Psoas muscle (tissue), 8 donors: ENCODE measurements at regions of chr3 and their contacts with region 1.

Region 1: GRCh38 chr3:8727605-8728512 is 5.7 kb upstream of the CAV3 start:
- DNase-seq: no peak
- ATAC-seq: no peak
- H3K4me3 ChIP-seq: no peak overlapping the region
- H3K27ac ChIP-seq: no peak overlapping the region
- H3K4me1 ChIP-seq: peaks cover 3% of the 10 kb centered on the region
- H3K27me3 ChIP-seq: no peaks in the 10 kb centered on the region
- CTCF ChIP-seq: no peak

Region 2: DNA sequence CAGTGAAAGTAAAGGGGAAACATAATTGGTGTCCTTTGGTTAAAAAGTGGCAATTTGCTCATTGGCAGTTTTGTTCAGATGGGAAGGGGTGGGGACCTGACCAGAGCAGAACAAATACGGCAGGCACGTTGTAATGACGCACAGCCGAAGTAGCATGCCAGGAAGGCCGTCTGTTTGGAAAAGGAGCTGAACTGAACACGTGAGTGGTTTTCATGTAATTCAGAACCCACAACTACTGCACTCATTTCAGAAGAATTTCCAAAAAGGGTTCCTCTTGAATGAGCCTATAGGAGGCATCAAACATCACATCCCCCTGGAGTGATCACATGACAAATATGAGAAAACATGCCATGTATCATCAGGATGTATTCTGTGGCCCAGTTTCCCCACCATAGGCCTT is 269.1 kb before region 1 on chr3:
- intact Hi-C with region 1: no loop called
- DNase-seq: peak in 1 of 2 donors; percentile 44
- ATAC-seq: peak in 2 of 4 donors; percentile 41 to 48
- H3K4me3 ChIP-seq: no peak overlapping the region
- H3K27ac ChIP-seq: no peak overlapping the region
- H3K4me1 ChIP-seq: no peaks in the 10 kb centered on the region
- H3K27me3 ChIP-seq: no peaks in the 10 kb centered on the region
- CTCF ChIP-seq: no peak

Region 3: DNA sequence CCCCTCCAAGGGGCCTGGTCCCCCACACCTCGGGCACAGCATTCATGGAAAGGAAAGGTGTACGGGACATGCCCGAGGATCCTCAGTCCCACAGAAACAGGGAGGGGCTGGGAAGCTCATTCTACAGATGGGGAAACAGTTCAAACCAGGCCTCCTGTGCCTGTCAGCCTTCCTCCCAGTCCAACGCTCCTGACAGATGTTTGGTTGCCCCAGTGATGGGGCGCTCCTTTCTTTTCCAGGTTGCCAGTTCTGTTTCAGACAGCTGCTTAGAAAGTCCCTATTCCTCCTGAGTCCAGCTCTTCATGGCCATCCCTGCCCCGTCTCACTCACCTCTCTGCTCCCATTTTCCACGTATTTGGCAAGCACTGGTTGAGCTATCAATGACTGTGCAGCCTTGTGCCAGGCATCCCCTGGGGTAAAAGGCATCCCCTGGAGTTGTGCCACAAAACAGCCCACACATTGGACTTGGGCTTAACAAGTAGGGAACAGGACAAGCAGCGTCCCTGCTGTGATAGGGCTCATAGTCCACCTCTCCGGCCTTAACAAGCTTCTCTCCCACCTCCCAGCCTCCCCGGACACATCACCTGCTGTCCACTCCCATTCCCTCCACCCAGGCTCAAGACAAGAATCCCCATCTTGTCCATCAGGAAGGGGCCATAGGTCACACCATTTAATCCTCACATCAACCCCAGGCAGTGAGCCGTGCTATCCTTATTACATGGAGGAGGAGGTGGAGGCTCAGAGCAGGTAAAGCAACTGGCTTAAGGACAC is 34.9 kb after region 1 on chr3:
- intact Hi-C with region 1: loop called in 1 of 2 experiments (anchors 5 kb)
- DNase-seq: no peak
- ATAC-seq: no peak
- H3K4me3 ChIP-seq: no peak overlapping the region
- H3K27ac ChIP-seq: no peak overlapping the region
- H3K4me1 ChIP-seq: peaks cover 22% of the 10 kb centered on the region
- H3K27me3 ChIP-seq: peaks cover 0 to 9% (median 2%) of the 10 kb centered on the region in 3 donors
- CTCF ChIP-seq: no peak